Astrocyte of the cerebellum (primary cell): ENCODE measurements at regions of chr11 and their contacts with region 1.

Region 1: DNA sequence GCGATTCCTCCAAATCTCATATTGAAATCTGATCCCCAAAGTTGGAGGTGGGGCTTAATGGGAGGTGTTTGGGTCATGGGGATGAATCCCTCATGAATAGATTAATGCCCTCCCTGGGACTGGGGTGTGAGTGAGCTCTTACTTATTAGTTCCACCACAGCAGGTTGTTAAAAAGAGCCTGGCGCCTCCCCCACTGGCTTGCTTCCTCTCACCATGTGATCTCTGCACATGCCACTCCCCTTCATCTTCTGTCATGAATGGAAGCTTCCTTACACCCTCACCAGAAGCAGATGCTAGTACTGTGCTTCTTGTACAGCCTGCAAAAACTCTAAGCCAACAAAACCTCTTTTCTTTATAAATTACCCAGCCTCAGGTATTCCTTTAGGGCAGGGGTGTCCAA is 8.8 kb downstream of the RRAS2 start:
- DNase-seq: no peak
- H3K4me3 ChIP-seq: no peak overlapping the region
- CTCF ChIP-seq: no peak

Region 2: DNA sequence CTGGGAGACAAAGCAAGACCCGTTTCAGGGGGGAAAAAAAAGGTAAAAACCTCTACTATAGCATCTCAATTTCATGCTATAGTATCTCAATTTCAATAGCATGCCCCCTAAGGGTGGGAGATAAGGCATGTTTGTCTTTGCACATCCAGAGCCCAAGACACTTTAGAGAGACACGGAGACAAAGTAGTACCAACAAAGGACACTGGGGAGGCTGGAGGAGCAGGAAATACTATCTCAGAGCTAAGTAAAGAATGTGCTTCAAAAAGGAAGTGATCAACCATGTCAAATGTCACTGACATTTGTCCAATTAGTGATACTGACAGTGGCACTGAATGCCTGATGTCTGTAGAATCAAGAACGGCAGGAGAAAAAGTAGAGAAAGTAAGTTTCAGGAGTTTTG is 59.8 kb before region 1 on chr11:
- in situ Hi-C with region 1: loop called (anchors 5 kb)
- DNase-seq: no peak
- H3K4me3 ChIP-seq: no peak overlapping the region
- CTCF ChIP-seq: no peak